ENCODE measurements at regions of chr11 and their contacts with region 1.

Region 1: DNA sequence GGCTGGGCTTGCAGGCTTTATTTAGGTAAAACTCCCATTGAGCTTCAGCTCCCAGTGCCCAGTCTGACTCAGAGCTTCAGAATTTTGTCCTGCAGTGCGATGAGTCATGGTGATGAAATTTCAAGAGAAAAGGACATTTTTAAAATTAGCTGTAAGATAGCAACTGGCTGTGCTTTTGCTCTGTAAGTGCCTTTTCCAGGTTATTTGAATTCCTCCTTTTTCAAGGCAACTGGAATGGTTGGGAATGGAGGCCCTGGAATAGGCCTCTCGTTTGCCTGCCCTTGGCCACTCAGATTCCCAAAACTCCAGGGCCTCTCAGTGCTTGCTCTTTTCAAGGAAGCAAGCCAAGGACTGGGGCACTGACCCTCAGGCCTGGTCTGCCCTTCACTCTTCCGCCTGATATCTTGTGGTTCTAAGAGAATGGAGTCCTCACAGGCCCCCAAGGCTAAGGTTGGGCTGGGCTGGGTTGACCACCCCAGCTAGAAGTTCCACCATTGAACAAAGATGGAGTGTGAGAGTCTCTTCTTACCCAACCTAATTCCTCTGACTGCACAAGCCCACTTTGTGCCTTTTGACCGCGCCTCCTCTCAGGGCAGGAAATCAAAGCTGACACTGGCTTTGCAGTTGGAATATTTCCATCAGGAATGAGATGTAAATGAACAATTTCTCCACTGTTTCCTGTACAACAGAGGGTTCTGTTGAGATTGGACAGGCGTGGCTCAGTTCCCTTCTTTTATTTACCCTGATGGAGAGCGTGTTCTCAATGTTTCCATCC is 59.4 kb upstream of the PRSS23 start:
- DNase-seq: peak; percentile 55
- H3K4me3 Mint-ChIP-seq: no peak overlapping the region
- H3K27ac Mint-ChIP-seq: no peak overlapping the region
- H3K4me1 Mint-ChIP-seq: peaks cover 19% of the 10 kb centered on the region
- H3K27me3 Mint-ChIP-seq: peaks cover 4% of the 10 kb centered on the region

Region 2: GRCh38 chr11:86671682-86672621 is 68.9 kb before region 1 on chr11 and contains the start of gene ME3:
- CTCF ChIA-PET with region 1: no interaction called
- POLR2A ChIA-PET with region 1: no interaction called
- intact Hi-C with region 1: loop called (anchors 5 kb)
- DNase-seq: peak; percentile 61
- H3K4me3 Mint-ChIP-seq: peak within 1 kb of the TSS; percentile 66
- H3K27ac Mint-ChIP-seq: no peak within 1 kb of the TSS
- H3K4me1 Mint-ChIP-seq: peaks cover 8% of the 10 kb centered on the region
- H3K27me3 Mint-ChIP-seq: peaks cover 23% of the 10 kb centered on the region
- total RNA-seq, gene ME3: 2.3 to 2.8 TPM

Region 3: DNA sequence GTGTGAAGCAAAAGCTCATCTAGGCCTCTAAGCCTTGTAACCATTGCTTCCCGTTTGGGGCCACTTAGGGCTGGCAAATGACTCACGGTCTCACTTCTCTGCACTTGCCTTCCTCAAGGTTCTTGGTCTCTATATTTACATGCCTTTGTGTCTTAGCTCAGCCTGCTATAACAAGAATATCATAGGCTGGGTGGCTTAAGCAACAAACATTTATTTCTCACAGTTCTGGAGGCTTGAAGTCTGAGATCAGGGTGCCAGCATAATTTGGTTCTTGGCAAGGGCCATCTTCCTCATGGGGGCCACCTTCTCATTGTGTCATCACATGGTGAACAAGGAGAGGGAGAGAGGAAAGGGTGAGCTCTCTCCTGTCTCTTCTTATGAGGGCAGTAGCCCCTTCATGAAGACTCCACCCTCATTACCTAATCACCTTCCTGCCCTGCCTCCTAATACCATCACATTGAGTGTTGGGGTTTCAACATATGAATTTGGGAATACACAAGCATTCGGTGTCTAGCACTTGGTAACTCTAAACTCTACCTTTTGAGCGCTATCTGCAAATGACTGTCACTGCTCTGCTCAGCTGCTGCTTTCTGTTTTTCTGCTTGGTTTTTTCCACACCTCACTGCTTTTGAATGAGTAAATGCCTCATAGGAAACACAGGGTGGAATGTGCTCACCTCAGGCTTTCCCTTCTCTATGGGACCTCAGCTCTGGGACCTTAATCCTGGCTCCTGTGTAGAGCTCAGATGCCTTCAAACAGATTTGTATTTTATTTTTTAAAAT is 52.3 kb before region 1 on chr11:
- CTCF ChIA-PET with region 1: no interaction called
- POLR2A ChIA-PET with region 1: interaction called, 4 read pairs
- intact Hi-C with region 1: loop called (anchors 1 kb)
- DNase-seq: peak; percentile 61
- H3K4me3 Mint-ChIP-seq: no peak overlapping the region
- H3K27ac Mint-ChIP-seq: peak overlapping the region; percentile 83
- H3K4me1 Mint-ChIP-seq: peaks cover 20% of the 10 kb centered on the region
- H3K27me3 Mint-ChIP-seq: peaks cover 9% of the 10 kb centered on the region

Measured in activated CD4-positive, alpha-beta memory T cell treated with anti-CD3 and anti-CD28 coated beads for 36 hours (primary cell).